Psoas muscle (tissue), 8 donors: ENCODE measurements at regions of chr7 and their contacts with region 1.

Region 1: GRCh38 chr7:95871078-95871782 is 98.9 kb downstream of the DYNC1I1 start:
- DNase-seq: no peak
- ATAC-seq: peak in 2 of 4 donors; percentile 57 to 68
- H3K4me3 ChIP-seq: no peak overlapping the region
- H3K27ac ChIP-seq: no peak overlapping the region
- H3K4me1 ChIP-seq: peaks cover 11% of the 10 kb centered on the region
- H3K27me3 ChIP-seq: no peaks in the 10 kb centered on the region
- CTCF ChIP-seq: peak; percentile 56

Region 2: DNA sequence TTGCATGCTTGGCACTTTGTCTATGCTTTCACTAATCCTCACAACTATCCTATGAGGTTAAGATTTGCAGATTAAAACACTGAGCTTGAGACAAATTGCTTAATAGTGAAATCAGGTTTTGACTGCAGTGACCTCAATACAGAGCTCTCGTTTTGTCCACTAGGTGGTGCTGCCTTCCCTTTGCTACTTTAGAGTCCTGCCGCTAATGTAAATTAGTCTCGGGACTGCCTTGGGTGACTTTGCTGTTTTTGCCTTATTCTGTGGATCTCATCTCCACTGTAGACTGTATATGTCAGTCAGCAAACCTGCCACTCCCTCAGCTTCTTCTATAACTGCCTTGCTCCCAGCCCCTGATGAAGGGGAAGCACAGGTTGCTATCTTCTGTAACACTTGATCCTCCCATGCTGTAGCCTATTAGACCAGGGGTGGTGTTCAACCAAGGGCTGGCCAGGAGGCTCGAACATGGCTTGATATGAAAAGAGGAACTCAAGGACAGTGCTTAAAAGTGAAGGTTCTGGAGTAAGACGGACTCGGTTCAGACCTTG is 359.4 kb before region 1 on chr7:
- intact Hi-C with region 1: loop called in 1 of 2 experiments (anchors 1 kb)
- DNase-seq: peak; percentile 55 to 63
- ATAC-seq: peak; percentile 85 to 96 (median 92)
- H3K4me3 ChIP-seq: peak overlapping the region; percentile 35
- H3K27ac ChIP-seq: peak overlapping the region; percentile 39
- H3K4me1 ChIP-seq: no peaks in the 10 kb centered on the region
- H3K27me3 ChIP-seq: no peaks in the 10 kb centered on the region
- CTCF ChIP-seq: peak; percentile 92

Region 3: DNA sequence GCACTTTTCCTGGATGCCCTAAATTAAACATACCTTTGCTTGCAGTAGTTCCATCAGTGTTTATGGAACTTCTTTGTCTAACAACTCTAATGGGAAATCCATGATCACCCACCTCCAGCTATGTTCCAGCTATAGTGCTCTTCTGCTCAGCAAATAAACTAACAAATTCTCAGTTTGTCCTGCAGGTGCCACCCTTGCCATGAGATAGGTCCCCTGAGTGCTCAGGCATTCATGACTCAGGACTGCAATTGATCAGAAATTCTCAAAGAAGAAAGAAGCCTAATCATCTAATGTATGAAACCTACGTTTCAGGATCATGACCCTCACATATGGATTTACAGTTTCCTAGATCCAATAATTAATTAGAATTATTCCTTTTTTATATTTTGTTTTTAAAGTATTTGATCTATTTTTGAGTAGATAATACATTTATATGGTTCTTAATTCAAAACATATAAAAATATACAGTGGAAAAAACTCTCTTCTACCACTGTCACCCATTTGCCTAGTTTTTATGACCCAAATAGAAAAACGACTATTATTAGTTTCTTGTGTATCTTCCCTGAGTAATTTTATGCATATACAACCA is 147.5 kb before region 1 on chr7:
- intact Hi-C with region 1: loop called (anchors 2 to 5 kb)
- DNase-seq: no peak
- ATAC-seq: peak in 3 of 4 donors; percentile 36 to 66 (median 57)
- H3K4me3 ChIP-seq: no peak overlapping the region
- H3K27ac ChIP-seq: no peak overlapping the region
- H3K4me1 ChIP-seq: no peaks in the 10 kb centered on the region
- H3K27me3 ChIP-seq: no peaks in the 10 kb centered on the region
- CTCF ChIP-seq: peak; percentile 38

Region 4: GRCh38 chr7:95811846-95812445 is 59.3 kb before region 1 on chr7:
- intact Hi-C with region 1: no loop called
- DNase-seq: no peak
- ATAC-seq: no peak
- H3K4me3 ChIP-seq: no peak overlapping the region
- H3K27ac ChIP-seq: no peak overlapping the region
- H3K4me1 ChIP-seq: no peaks in the 10 kb centered on the region
- H3K27me3 ChIP-seq: no peaks in the 10 kb centered on the region
- CTCF ChIP-seq: no peak